AG04449 (cell line): ENCODE measurements at regions of chr11 and their contacts with region 1.

Region 1: GRCh38 chr11:44256673-44257291 is 53.2 kb downstream of the ALX4 start:
- DNase-seq: no peak
- H3K4me3 ChIP-seq: no peak overlapping the region
- CTCF ChIP-seq: no peak

Region 2: DNA sequence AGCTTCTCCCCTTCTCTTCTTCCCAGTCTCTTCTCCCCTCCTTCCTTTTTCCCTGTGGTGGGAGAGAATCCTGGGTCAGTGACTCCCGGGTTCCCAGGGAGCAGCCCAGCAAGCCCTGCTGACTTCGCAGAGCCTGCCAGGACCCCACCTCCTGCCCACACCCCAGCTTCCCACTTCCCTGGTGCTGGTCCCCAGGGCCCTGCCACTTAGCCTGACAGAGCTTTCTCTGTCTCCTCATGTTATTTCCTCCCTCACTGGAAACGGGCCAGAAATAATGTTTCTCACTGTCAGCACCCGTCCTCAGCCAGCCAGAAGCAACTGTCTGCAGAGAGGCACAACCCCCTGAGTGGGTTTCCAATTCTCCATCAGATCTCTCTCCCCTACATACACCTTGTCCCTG is 287.2 kb before region 1 on chr11:
- CTCF ChIA-PET with region 1: no interaction called
- POLR2A ChIA-PET with region 1: no interaction called
- DNase-seq: no peak
- H3K4me3 ChIP-seq: no peak overlapping the region
- CTCF ChIP-seq: no peak

Region 3: DNA sequence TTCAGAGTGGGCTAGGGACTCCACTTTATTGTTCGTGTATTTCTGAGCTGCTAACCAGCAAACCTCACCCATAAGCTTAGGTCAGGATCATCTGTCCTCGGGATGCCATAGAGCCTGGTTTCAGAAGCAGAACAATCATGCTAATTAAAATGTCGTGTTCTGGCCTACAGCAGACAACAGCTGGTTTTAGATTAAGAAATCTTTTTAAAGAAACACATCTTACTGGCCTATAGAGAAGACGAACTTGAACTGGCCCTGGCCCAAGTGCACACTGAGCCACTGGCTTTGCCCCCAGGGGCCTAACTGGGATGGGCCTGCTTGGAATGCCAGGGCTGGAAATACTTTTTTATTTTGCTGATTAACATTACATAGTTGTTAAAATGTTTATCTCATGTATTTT is 10.1 kb before region 1 on chr11:
- CTCF ChIA-PET with region 1: interaction called, 13 read pairs
- POLR2A ChIA-PET with region 1: no interaction called
- DNase-seq: no peak
- H3K4me3 ChIP-seq: no peak overlapping the region
- CTCF ChIP-seq: no peak

Region 4: DNA sequence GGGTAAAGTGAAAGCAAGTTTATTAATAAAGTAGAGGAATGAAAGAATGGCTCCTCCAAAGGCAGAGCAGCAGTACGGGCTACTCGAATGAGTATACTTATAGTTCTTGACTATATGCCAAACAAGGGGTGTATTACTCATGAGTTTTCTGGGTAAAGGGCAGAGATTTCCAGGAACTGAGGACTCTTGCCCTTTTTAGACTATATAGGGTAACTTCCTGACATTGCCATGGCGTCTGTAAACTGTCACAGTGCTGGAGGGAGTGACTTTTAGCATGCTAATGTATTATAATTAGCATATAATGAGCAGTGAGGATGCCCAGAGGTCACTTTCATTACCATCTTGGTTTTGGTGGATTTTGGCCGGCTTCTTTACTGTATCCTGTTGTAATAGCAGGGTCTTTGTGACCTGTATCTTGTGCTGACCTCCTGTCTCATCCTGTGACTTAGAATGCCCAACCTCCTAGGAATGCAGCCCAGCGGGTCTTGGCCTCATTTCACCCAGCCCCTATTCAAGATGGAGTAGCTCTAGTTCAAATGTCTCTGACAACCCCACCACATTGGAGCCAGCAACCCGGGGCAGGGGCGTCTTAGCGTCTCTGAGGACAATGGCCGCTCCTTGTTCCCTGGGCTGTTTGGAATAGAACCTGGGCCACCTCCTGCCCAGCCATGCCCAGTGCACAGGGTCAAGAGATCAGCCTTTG is 273.8 kb after region 1 on chr11:
- CTCF ChIA-PET with region 1: no interaction called
- POLR2A ChIA-PET with region 1: no interaction called
- DNase-seq: no peak
- H3K4me3 ChIP-seq: no peak overlapping the region
- CTCF ChIP-seq: no peak